ENCODE measurements at regions of chrX and their contacts with region 1.

Region 1: DNA sequence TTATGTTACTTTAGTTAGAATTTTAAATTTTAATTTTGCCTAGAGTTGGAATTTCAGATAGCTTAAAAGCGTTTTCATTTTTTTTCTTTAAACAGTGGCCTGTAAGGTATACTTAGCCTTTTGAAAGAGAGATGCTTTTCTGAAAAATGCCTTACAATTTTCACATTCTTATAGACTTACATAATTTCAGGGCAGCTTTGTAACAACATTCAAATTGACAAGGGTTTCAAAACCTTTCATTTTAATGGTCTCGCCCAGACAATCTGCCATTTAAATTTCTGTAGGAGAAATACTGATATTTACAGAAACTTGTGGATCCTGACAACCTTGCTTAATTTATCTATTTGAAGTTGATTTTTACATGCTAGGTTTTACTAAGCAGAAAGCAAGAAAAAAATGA is 30.2 kb downstream of the FANCB start:
- DNase-seq: no peak
- ATAC-seq: no peak
- H3K4me3 ChIP-seq: no peak overlapping the region
- H3K4me3 Mint-ChIP-seq: no peak overlapping the region
- H3K27ac ChIP-seq: no peak overlapping the region
- H3K27ac Mint-ChIP-seq: no peak overlapping the region
- H3K4me1 ChIP-seq: no peaks in the 10 kb centered on the region
- H3K4me1 Mint-ChIP-seq: no peaks in the 10 kb centered on the region
- H3K27me3 ChIP-seq: no peaks in the 10 kb centered on the region
- H3K27me3 Mint-ChIP-seq: no peaks in the 10 kb centered on the region
- CTCF ChIP-seq: no peak

Region 2: GRCh38 chrX:14899607-14900006 is 56.9 kb after region 1 on chrX:
- CTCF ChIA-PET with region 1: no interaction called
- POLR2A ChIA-PET with region 1: no interaction called
- intact Hi-C with region 1: loop called in 1 of 2 experiments (anchors 10 kb)
- DNase-seq: peak in 2 of 9 experiments; percentile 8 to 27
- ATAC-seq: no peak
- H3K4me3 ChIP-seq: no peak overlapping the region
- H3K4me3 Mint-ChIP-seq: no peak overlapping the region
- H3K27ac ChIP-seq: no peak overlapping the region
- H3K27ac Mint-ChIP-seq: no peak overlapping the region
- H3K4me1 ChIP-seq: no peaks in the 10 kb centered on the region
- H3K4me1 Mint-ChIP-seq: no peaks in the 10 kb centered on the region
- H3K27me3 ChIP-seq: no peaks in the 10 kb centered on the region
- H3K27me3 Mint-ChIP-seq: no peaks in the 10 kb centered on the region
- CTCF ChIP-seq: no peak

Region 3: GRCh38 chrX:14936561-14936960 is 93.9 kb after region 1 on chrX:
- CTCF ChIA-PET with region 1: no interaction called
- POLR2A ChIA-PET with region 1: no interaction called
- intact Hi-C with region 1: no loop called
- DNase-seq: no peak
- ATAC-seq: no peak
- H3K4me3 ChIP-seq: no peak overlapping the region
- H3K4me3 Mint-ChIP-seq: no peak overlapping the region
- H3K27ac ChIP-seq: no peak overlapping the region
- H3K27ac Mint-ChIP-seq: no peak overlapping the region
- H3K4me1 ChIP-seq: no peaks in the 10 kb centered on the region
- H3K4me1 Mint-ChIP-seq: no peaks in the 10 kb centered on the region
- H3K27me3 ChIP-seq: no peaks in the 10 kb centered on the region
- H3K27me3 Mint-ChIP-seq: peaks cover 3% of the 10 kb centered on the region
- CTCF ChIP-seq: no peak